OCI-LY7 (cell line): ENCODE measurements at regions of chr19 and their contacts with region 1.

Region 1: DNA sequence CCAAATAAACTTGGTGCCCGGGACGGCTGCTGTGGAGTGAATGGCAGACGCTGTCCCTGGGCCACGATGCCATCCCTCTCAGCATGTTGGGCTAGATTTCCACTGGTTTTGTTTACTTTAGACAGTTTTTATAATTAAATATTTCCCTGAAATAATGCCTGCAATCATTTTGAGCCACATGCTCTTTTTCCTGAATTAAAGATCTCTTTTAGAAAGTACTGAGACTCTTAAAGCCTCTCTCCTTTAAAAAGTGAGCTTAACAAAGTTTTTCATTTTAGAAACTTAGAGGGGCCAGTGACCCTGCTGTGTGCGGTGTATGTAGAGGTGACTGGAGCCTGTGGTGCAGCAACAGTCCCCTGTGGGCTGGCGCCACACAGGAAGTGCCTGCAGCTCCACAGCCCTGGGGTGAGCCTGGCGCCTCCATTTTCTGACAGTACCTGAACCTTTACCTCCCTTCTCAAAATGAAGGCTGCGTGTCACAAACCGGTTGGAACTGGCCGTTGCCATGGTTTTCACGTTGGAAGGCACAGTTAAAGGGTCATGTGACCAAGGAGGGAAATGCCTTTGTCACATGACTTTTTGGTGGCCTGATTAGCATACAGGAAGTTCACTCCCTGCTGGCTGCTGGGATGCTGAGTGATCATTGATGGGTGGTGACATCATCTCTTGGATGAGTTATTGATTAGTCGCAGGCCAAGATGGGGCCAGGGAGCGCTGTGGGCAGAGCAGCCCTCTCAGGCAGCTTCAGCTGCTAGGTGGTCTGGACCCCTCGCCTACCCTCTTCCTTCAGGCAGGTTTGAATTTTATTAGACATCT is 26.3 kb downstream of the TSSK6 start:
- DNase-seq: peak; percentile 93
- H3K4me3 ChIP-seq: peak overlapping the region; percentile 42
- H3K27ac ChIP-seq: peak overlapping the region; percentile 90
- H3K4me1 ChIP-seq: peaks cover 33% of the 10 kb centered on the region
- CTCF ChIP-seq: no peak

Region 2: DNA sequence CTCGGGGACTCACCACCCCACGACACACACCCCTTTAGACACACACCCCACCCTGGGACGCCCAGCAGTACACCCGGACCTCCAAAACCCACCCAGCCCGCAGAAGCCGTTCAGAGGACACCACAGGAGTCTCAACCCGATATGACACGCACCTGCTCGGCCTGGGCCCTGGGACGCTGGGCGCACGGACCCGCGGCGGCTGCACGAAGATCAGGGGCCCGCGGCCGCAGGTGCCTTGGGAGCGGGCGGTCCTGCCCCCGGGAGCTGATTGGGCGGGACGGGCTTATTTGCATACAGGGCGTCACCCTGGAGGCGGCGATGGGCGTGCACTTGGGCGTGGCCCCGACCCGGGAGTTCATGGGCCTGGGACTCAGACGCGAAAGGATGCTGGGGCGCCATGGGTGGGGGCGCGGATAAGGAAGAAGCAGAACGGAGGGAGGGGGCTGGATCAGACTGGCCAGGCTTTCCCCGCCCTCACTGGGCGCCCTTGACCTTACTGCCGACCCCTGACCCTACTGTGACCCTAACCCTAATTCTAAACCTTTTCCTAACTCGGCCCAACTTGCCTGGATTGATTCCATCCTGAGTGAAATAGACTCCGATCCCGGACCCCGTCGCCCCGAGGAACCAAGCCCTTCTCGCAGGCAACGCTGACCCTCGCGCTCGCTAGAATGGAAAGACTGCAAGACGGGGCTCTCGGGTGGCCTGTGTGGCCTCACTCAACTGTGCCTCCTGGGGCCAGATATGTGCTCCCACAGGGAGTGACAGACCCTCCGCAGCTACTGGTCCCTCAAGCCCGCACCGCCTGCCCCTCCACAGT is 318.8 kb before region 1 on chr19 and contains the start of gene MEF2B:
- CTCF ChIA-PET with region 1: interaction called, 10 read pairs
- POLR2A ChIA-PET with region 1: no interaction called
- intact Hi-C with region 1: no loop called
- DNase-seq: peak; percentile 96
- H3K4me3 ChIP-seq: peak within 1 kb of the TSS; percentile 93
- H3K27ac ChIP-seq: peak within 1 kb of the TSS; percentile 98
- H3K4me1 ChIP-seq: peaks cover 71% of the 10 kb centered on the region
- CTCF ChIP-seq: no peak
- total RNA-seq, gene MEF2B: 175 and 201 TPM in 2 replicates

Region 3: GRCh38 chr19:19192078-19192882 is 296.8 kb before region 1 on chr19 and contains the starts of genes BORCS8 and RFXANK:
- CTCF ChIA-PET with region 1: no interaction called
- POLR2A ChIA-PET with region 1: no interaction called
- intact Hi-C with region 1: loop called (anchors 1 kb)
- DNase-seq: peak; percentile 100
- H3K4me3 ChIP-seq: peak within 1 kb of the TSS; percentile 93
- H3K27ac ChIP-seq: peak within 1 kb of the TSS; percentile 89
- H3K4me1 ChIP-seq: peaks cover 31% of the 10 kb centered on the region
- CTCF ChIP-seq: no peak
- total RNA-seq, gene BORCS8: 31.0 and 39.8 TPM in 2 replicates
- total RNA-seq, gene RFXANK: 103 and 105 TPM in 2 replicates

Region 4: GRCh38 chr19:19361075-19361594 is 127.9 kb before region 1 on chr19:
- CTCF ChIA-PET with region 1: interaction called, 5 read pairs
- POLR2A ChIA-PET with region 1: interaction called, 10 read pairs
- intact Hi-C with region 1: no loop called
- DNase-seq: peak; percentile 81
- H3K4me3 ChIP-seq: no peak overlapping the region
- H3K27ac ChIP-seq: peak overlapping the region; percentile 20
- H3K4me1 ChIP-seq: peaks cover 30% of the 10 kb centered on the region
- CTCF ChIP-seq: peak; percentile 84

Region 5: DNA sequence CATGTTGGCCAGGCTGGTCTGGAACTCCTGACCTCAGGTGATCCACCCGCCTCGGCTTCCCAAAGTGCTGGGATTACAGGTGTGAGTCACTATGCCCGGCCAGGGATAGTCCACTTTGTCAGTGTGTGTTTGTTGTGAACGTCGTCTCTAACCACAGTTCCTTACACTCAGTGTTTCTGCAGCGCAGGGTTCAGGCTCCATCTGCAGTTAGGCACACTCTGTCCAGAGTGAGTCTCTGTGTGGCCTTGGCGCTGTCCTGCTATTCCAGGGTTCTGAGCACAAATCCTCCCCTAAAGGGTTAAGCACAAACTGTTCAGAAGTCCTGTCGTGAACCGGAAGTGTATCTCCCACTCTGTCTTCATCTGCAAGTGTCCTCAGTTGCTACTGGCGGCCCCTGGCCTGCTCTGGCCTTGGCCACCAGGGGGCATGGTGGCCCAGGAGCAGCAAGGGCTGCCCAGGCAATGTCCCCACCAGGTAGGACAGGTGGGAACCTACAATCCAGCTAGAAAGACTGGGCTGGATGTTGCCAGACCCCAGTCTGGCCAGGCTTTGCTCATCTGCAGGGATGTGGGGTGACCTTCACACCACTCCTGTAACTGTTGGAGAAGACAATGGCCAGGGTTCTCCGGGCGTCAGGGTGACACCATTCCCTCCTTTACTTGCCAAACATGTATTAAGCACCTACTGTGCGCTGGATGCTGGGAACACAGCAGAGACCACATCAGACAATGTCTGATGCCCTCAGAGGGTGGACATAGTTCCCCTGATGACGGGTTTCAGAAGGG is 122.3 kb before region 1 on chr19:
- CTCF ChIA-PET with region 1: interaction called, 5 read pairs
- POLR2A ChIA-PET with region 1: interaction called, 10 read pairs
- intact Hi-C with region 1: loop called (anchors 1 kb)
- DNase-seq: peak; percentile 92
- H3K4me3 ChIP-seq: peak overlapping the region; percentile 50
- H3K27ac ChIP-seq: peak overlapping the region; percentile 43
- H3K4me1 ChIP-seq: peaks cover 27% of the 10 kb centered on the region
- CTCF ChIP-seq: peak; percentile 97

Region 6: DNA sequence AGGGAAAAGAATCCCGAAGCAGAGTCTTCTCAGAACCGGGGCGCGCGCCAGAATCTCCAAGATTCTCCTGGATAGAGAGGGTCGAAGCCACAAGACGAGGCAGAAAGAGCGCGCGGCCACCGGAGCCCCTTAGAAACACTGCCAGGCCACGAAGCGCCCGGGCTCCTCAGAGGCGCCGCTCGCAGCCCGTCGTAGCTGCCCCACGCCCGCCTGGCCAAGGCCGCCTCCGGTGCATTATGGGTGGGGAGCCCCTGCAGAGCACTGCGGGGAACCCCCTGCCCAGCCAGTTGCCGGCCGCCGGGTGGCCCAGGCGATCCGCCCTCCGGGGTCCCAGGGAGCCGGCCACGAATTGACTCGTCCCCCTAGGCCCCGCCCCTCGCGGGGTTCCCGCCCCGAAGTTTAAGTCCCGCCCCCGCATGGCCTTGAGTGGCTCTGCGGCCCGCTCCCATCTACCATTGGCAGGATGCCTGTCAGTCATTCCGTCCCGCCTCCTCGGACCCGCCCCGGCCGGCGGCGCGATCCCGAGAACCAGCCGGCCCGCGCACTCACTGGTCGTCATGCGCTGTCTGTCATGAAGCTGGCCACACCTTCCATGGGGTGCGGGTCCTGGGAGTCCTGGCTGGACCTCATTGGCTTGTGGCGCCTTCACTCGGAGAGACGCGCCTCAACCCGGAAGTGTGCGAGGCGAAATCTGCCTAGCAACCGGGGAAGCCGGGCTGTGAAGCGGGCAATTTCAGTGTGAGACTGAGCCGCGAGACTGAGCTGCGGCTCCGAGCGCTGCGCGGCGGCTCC is 103.8 kb before region 1 on chr19:
- CTCF ChIA-PET with region 1: no interaction called
- POLR2A ChIA-PET with region 1: no interaction called
- intact Hi-C with region 1: loop called (anchors 5 kb)
- DNase-seq: peak; percentile 100
- H3K4me3 ChIP-seq: peak overlapping the region; percentile 94
- H3K27ac ChIP-seq: no peak overlapping the region
- H3K4me1 ChIP-seq: peaks cover 57% of the 10 kb centered on the region
- CTCF ChIP-seq: no peak

Region 7: DNA sequence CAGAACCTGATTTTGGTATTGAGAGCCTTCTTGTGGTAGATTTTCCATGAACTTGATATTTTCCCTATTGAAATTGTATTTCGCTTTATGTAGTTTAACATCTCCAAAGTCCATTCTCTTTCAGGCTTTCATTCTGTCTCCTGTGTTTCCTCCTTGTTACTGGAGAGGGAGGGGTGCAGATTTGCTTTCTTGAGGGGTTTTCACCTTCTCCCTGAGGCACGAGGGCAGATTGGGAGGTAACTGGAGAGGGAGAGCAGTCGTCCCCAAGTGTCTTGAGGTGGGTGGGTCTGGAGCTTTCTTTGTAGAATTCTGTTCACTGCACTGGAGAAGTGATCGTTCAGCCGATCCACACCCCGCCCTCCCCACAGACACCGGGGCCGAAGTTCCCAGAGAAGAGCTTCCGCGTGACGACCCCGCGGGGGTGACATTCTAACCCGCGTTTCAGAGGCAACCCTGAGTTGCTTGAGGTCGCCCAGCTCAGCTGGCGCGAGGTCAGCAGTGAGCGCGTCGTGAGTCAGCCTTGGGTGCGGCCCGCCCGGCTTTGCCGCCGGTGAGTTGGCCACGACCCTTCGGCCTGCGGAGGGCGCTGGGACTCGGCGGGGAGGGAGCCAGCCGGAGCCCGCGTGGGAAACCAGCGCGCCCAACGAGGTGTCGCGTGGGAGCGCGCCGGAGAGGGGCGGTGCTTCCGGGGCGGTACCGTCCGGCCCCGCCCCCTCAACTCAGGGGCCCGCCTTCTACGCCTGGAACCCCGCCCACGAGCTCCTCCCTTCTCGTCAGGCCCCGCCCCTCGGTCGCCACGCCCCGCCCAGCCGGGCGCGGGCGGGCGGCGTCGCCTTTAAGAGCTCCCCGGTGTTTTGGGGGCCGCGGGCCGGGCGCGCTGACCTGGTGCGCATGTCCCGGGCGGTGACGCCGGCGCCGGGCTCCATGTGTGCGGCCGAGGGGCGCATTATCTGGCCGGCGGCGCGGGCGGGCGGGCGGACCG is 83.9 kb before region 1 on chr19 and contains the start of gene GATAD2A:
- CTCF ChIA-PET with region 1: interaction called, 3 read pairs
- POLR2A ChIA-PET with region 1: interaction called, 7 read pairs
- intact Hi-C with region 1: loop called (anchors 1 kb)
- DNase-seq: peak; percentile 90
- H3K4me3 ChIP-seq: peak within 1 kb of the TSS; percentile 80
- H3K27ac ChIP-seq: peak within 1 kb of the TSS; percentile 61
- H3K4me1 ChIP-seq: peaks cover 46% of the 10 kb centered on the region
- CTCF ChIP-seq: peak; percentile 42
- total RNA-seq, gene GATAD2A: 62.8 and 73.4 TPM in 2 replicates

Region 8: GRCh38 chr19:19540715-19541440 is 51.8 kb after region 1 on chr19:
- CTCF ChIA-PET with region 1: no interaction called
- POLR2A ChIA-PET with region 1: no interaction called
- intact Hi-C with region 1: no loop called
- DNase-seq: peak; percentile 78
- H3K4me3 ChIP-seq: no peak overlapping the region
- H3K27ac ChIP-seq: no peak overlapping the region
- H3K4me1 ChIP-seq: peaks cover 14% of the 10 kb centered on the region
- CTCF ChIP-seq: no peak